Dorsolateral prefrontal cortex (tissue), 120 donors: ENCODE measurements at regions of chr4 and their contacts with region 1.

Region 1: DNA sequence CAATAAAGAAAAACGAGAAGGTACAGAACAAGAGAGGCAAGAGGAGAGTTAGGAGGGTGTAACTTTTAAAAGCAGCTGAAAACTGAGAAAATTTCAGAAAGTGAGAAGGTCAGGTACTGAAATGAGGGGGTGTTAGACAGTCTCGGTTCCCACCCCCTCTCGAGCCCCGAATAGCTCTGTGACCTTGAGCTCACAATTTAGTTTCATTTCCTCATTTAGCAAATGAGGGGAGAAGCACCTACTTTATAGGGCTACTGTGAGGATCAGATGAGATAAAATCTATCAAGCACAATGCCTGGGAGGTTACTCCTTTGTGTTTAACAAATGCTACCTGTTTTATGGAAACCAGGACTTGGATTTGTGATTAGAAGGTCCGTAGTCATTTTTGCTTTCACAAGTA is 4.9 kb downstream of the UGT8 start:
- DNase-seq: no peak
- H3K4me3 ChIP-seq: peak overlapping the region in 51 of 59 donors; percentile 2 to 86 (median 41)
- H3K27ac ChIP-seq: peak overlapping the region in 55 of 59 donors; percentile 15 to 98 (median 92)
- H3K27me3 ChIP-seq: peaks cover 0 to 13% (median 0%) of the 10 kb centered on the region in 45 donors
- CTCF ChIP-seq: no peak

Region 2: GRCh38 chr4:114636192-114636935 is 32.9 kb after region 1 on chr4:
- intact Hi-C with region 1: loop called in 1 of 2 experiments (anchors 5 kb)
- DNase-seq: peak in 1 of 10 donors; percentile 61
- H3K4me3 ChIP-seq: peak overlapping the region in 43 of 59 donors; percentile 1 to 57 (median 31)
- H3K27ac ChIP-seq: peak overlapping the region; percentile 43 to 99 (median 93)
- H3K27me3 ChIP-seq: no peaks in the 10 kb centered on the region
- CTCF ChIP-seq: peak in 4 of 56 donors; percentile 5 to 23 (median 12)

Region 3: DNA sequence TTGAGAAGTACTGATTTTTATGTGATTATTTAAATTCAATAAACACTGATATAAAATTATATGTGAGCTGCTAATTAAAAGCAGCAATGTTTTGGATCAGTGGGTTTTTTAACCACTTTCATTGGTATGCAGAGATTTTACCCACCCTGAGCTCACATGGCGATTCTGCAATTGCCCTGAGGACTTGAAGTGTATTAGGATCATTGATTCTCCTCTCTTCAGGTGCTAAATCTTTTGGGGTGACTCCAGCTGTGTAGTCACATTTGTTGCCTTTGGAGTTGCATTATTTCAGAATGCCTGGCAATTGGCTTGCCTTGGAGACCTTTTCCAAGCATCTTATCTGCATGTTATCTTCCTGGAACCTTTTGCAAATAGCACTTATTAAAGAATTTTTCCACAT is 46.4 kb after region 1 on chr4:
- intact Hi-C with region 1: no loop called
- DNase-seq: no peak
- H3K4me3 ChIP-seq: no peak overlapping the region
- H3K27ac ChIP-seq: peak overlapping the region in 32 of 59 donors; percentile 6 to 99 (median 59)
- H3K27me3 ChIP-seq: peaks cover 0 to 3% (median 0%) of the 10 kb centered on the region in 45 donors
- CTCF ChIP-seq: no peak

Region 4: GRCh38 chr4:114752391-114753165 is 149.1 kb after region 1 on chr4:
- intact Hi-C with region 1: no loop called
- DNase-seq: no peak
- H3K4me3 ChIP-seq: no peak overlapping the region
- H3K27ac ChIP-seq: no peak overlapping the region
- H3K27me3 ChIP-seq: no peaks in the 10 kb centered on the region
- CTCF ChIP-seq: no peak